Transverse colon (tissue), 4 donors: ENCODE measurements at regions of chr7 and their contacts with region 1.

Region 1: GRCh38 chr7:84568781-84569180 is 374.2 kb upstream of the SEMA3A start:
- DNase-seq: no peak
- H3K4me3 ChIP-seq: no peak overlapping the region
- H3K27ac ChIP-seq: no peak overlapping the region
- H3K4me1 ChIP-seq: no peaks in the 10 kb centered on the region
- H3K27me3 ChIP-seq: no peaks in the 10 kb centered on the region
- CTCF ChIP-seq: no peak
- EP300 ChIP-seq: no peak
- POLR2A ChIP-seq: no peak

Region 2: GRCh38 chr7:83970081-83970480 is 598.7 kb before region 1 on chr7:
- in situ Hi-C with region 1: no loop called
- intact Hi-C with region 1: no loop called
- DNase-seq: no peak
- H3K4me3 ChIP-seq: no peak overlapping the region
- H3K27ac ChIP-seq: no peak overlapping the region
- H3K4me1 ChIP-seq: no peaks in the 10 kb centered on the region
- H3K27me3 ChIP-seq: no peaks in the 10 kb centered on the region
- CTCF ChIP-seq: no peak
- EP300 ChIP-seq: no peak
- POLR2A ChIP-seq: no peak

Region 3: GRCh38 chr7:84176716-84177115 is 392.1 kb before region 1 on chr7:
- in situ Hi-C with region 1: no loop called
- intact Hi-C with region 1: no loop called
- DNase-seq: no peak
- H3K4me3 ChIP-seq: no peak overlapping the region
- H3K27ac ChIP-seq: peak overlapping the region in 3 of 4 donors; percentile 22 to 59 (median 35)
- H3K4me1 ChIP-seq: peaks cover 0 to 9% (median 2%) of the 10 kb centered on the region in 4 donors
- H3K27me3 ChIP-seq: no peaks in the 10 kb centered on the region
- CTCF ChIP-seq: no peak
- EP300 ChIP-seq: no peak
- POLR2A ChIP-seq: no peak

Region 4: DNA sequence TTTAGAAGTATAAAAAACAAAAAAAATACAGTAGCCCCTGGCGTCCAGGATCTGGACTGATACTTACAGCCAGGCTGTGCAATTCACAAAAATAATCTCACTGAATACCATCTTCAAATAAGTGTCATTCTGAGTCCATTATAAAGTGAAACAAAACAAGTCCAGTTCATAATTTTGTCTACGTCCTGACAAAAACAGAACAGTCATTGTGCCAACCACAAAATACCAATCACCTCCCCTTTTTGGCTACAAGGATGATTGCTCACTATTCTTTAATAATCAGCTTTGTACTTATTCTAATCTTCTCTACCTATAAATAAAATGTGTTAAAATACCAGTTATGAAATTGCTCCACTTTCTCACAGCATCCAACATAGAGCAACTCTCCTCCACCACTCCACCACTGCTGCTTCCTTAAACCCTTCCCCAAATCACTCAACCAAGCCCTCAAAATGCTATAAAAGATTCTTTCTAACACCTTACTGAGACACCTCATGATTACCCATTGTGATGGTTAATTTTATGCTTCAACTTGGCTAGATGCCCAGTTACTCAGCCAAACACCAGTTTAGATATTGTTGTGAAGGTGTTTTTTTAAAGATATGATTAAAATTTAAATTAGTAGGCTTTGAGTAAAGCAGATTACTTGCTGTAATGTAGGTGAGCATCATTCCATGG is 105.6 kb after region 1 on chr7:
- in situ Hi-C with region 1: loop called in 1 of 4 experiments (anchors 25 kb)
- intact Hi-C with region 1: no loop called
- DNase-seq: no peak
- H3K4me3 ChIP-seq: no peak overlapping the region
- H3K27ac ChIP-seq: no peak overlapping the region
- H3K4me1 ChIP-seq: no peaks in the 10 kb centered on the region
- H3K27me3 ChIP-seq: no peaks in the 10 kb centered on the region
- CTCF ChIP-seq: no peak
- EP300 ChIP-seq: no peak
- POLR2A ChIP-seq: no peak

Region 5: DNA sequence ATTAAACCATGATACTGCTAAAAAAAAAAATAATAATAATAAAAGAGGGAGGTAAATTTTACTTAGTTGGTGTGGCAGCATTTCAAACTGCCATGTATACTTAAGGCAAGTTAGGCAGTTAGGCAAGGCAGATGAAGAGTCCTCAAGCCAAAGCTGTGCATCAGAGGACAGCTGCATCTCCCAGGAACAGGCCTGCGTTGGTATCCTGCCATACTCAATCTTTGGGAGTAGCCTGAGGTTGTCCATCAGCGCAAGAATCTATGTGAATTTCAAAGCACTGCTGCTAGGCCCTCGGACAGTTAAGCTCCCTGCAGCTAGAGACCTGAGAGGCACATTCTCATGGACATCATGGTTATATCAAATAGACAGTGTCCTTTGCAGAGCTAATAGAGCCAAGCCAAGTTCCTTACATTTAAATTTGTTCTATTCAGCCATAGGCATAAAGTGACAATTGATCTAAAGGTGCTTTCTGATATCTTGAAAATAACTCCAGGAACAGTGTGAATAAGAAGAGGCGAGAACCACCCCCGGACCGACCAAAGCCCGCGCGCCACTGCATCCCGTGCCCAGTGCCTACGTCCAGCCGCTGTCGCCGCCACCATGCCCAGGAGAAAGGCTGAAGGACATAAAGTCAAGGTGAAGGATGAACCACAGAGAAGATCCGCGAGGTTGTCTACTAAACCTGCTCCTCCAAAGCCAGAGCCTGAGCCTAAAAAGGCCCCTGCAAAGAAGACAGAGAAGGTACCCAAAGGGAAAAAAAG is 307.5 kb after region 1 on chr7:
- in situ Hi-C with region 1: no loop called
- intact Hi-C with region 1: no loop called
- DNase-seq: no peak
- H3K4me3 ChIP-seq: no peak overlapping the region
- H3K27ac ChIP-seq: no peak overlapping the region
- H3K4me1 ChIP-seq: no peaks in the 10 kb centered on the region
- H3K27me3 ChIP-seq: no peaks in the 10 kb centered on the region
- CTCF ChIP-seq: no peak
- EP300 ChIP-seq: no peak
- POLR2A ChIP-seq: no peak

Region 6: DNA sequence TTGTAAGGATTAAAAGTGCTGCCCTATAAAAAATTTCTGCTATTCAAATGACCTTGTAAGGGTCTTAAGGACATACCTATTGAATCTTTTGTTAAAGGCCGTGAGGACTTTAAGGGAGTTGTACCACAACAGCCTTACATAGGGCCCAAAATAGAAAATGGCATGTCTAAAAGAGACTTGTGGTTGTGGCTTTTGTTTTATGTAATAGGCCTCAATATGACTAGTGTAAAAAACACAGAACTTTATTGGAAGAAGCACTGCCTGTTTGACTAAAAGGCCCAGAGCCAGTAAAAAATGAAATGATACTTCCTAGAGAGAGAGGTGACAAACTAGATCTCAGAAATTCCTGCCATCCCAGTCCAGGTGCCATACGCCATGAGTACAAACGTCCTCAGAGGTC is 331.4 kb after region 1 on chr7:
- in situ Hi-C with region 1: no loop called
- intact Hi-C with region 1: no loop called
- DNase-seq: no peak
- H3K4me3 ChIP-seq: no peak overlapping the region
- H3K27ac ChIP-seq: no peak overlapping the region
- H3K4me1 ChIP-seq: no peaks in the 10 kb centered on the region
- H3K27me3 ChIP-seq: no peaks in the 10 kb centered on the region
- CTCF ChIP-seq: no peak
- EP300 ChIP-seq: no peak
- POLR2A ChIP-seq: no peak